Uterus (tissue), 4 donors: ENCODE measurements at regions of chr7 and their contacts with region 1.

Region 1: GRCh38 chr7:726084-726853 is at the start of gene DNAAF5:
- DNase-seq: peak; percentile 73 to 85
- H3K4me3 ChIP-seq: peak within 1 kb of the TSS; percentile 35 to 93
- H3K27ac ChIP-seq: peak within 1 kb of the TSS; percentile 28 to 52
- H3K4me1 ChIP-seq: peaks cover 0 to 16% of the 10 kb centered on the region in 2 donors
- H3K27me3 ChIP-seq: no peaks in the 10 kb centered on the region
- CTCF ChIP-seq: peak in 1 of 4 experiments; percentile 12
- POLR2A ChIP-seq: peak in 1 of 2 donors; percentile 39
- total RNA-seq, gene DNAAF5: 5.6 to 34.3 (median 13.3) TPM

Region 2: GRCh38 chr7:503575-504111 is 222.6 kb before region 1 on chr7:
- intact Hi-C with region 1: loop called (anchors 10 kb)
- DNase-seq: no peak
- H3K4me3 ChIP-seq: no peak overlapping the region
- H3K27ac ChIP-seq: no peak overlapping the region
- H3K4me1 ChIP-seq: no peaks in the 10 kb centered on the region
- H3K27me3 ChIP-seq: no peaks in the 10 kb centered on the region
- CTCF ChIP-seq: no peak
- POLR2A ChIP-seq: no peak

Region 3: GRCh38 chr7:936131-937054 is 210.1 kb after region 1 on chr7:
- intact Hi-C with region 1: no loop called
- DNase-seq: no peak
- H3K4me3 ChIP-seq: no peak overlapping the region
- H3K27ac ChIP-seq: no peak overlapping the region
- H3K4me1 ChIP-seq: no peaks in the 10 kb centered on the region
- H3K27me3 ChIP-seq: no peaks in the 10 kb centered on the region
- CTCF ChIP-seq: no peak
- POLR2A ChIP-seq: no peak